Activated T-helper 2 cell treated with anti-CD3 and anti-CD28 coated beads, Interferon-gamma antibody, Interleukin-2, Interleukin-4, amounts not matched to agents 10 μg/mL and 5 μg/mL and 100 μg/mL, durations not matched to agents 14 hours and 24 hours and 36 hours (primary cell): ENCODE measurements at regions of chr9 and their contacts with region 1.

Region 1: DNA sequence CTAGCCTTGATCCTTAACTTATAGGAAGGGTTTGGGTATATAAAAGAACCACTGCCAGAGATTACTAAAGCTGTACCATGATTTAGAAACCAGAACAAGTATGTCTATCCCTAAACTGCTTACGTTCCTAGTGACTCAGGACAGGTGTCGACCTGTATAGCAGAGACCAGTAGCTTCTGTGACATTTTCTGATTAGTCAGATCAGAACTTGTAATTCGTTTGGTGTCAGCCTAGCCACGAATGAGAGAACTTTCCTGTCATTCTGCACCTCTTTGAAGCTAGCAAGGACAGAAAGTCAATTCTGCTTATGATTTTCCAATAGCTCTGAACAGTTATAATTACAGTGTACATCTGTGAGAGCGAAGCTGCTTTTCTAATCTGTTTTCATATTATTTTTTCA is 39.5 kb downstream of the PRKACG start:
- DNase-seq: peak; percentile 28
- H3K4me3 Mint-ChIP-seq: peak overlapping the region; percentile 64
- H3K27ac Mint-ChIP-seq: peak overlapping the region; percentile 89
- H3K4me1 Mint-ChIP-seq: peaks cover 66% of the 10 kb centered on the region
- H3K27me3 Mint-ChIP-seq: no peaks in the 10 kb centered on the region

Region 2: DNA sequence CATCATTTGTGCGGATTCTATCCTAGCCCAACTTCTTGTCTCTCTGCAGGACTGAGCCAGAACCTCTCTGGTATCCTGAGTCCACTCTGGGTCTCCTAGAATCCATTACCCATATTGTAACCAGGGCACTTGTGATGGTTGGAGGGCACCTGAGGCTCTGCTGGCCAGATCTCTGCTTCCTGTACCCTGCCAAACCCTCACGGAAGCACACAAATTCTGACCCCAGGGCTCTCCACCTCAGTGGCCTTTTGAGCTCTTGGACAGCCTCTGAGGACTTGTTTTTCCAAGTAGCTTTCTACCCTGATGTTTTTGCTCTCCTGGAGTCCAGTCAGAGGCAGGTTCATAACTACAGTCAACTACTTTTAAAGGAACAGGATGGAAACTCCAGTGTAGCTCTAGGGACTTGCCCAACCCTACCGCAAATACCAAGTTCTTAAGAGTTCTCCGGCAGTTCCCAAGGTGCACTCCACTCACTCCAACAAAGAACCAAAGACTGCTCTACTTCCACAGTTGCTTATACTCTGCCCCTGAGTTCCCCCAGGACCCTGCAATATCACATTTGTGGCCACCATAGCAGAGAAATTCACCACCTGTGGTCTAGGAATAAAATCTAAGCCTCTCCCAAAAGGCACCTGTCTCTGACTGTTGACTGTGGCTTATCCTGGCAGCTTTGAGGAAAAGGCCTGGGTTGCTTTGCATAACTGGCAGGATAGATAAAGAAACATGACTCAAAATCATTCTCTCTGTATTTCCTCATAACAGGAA is 259.8 kb before region 1 on chr9:
- intact Hi-C with region 1: loop called (anchors 5 kb)
- DNase-seq: no peak
- H3K4me3 Mint-ChIP-seq: no peak overlapping the region
- H3K27ac Mint-ChIP-seq: peak overlapping the region; percentile 25
- H3K4me1 Mint-ChIP-seq: peaks cover 61% of the 10 kb centered on the region
- H3K27me3 Mint-ChIP-seq: peaks cover 4% of the 10 kb centered on the region

Region 3: GRCh38 chr9:68895741-68896478 is 78.5 kb before region 1 on chr9:
- intact Hi-C with region 1: loop called (anchors 1 kb)
- DNase-seq: no peak
- H3K4me3 Mint-ChIP-seq: peak overlapping the region; percentile 78
- H3K27ac Mint-ChIP-seq: peak overlapping the region; percentile 94
- H3K4me1 Mint-ChIP-seq: peaks cover 57% of the 10 kb centered on the region
- H3K27me3 Mint-ChIP-seq: no peaks in the 10 kb centered on the region

Region 4: DNA sequence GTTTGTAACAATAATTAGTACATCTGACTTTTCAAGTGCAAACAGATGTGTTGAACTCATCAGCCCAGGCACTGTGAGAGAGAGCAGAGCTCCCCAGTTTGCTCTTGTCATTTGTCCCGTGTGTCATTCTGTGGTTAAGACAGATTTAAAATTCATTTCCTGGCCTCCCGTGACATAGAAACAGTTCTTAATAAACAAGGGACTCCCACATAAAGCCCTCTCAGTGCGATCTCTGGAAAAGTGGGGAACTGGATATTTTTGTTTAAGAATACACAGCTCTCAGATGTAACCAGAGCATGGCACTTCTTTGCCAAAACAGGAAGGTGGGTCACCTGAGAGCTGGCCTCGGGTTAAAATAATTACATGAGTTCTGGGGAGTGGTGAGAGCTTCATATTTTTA is 19.1 kb before region 1 on chr9:
- intact Hi-C with region 1: loop called (anchors 1 kb)
- DNase-seq: no peak
- H3K4me3 Mint-ChIP-seq: peak overlapping the region; percentile 24
- H3K27ac Mint-ChIP-seq: peak overlapping the region; percentile 84
- H3K4me1 Mint-ChIP-seq: peaks cover 69% of the 10 kb centered on the region
- H3K27me3 Mint-ChIP-seq: no peaks in the 10 kb centered on the region

Region 5: GRCh38 chr9:69035438-69036308 is 61.2 kb after region 1 on chr9 and contains the start of gene FXN:
- intact Hi-C with region 1: loop called (anchors 5 kb)
- DNase-seq: peak; percentile 77
- H3K4me3 Mint-ChIP-seq: peak within 1 kb of the TSS; percentile 91
- H3K27ac Mint-ChIP-seq: peak within 1 kb of the TSS; percentile 84
- H3K4me1 Mint-ChIP-seq: peaks cover 25% of the 10 kb centered on the region
- H3K27me3 Mint-ChIP-seq: no peaks in the 10 kb centered on the region
- total RNA-seq, gene FXN: 46.8 and 56.7 TPM in 2 replicates